ENCODE measurements at regions of chr3 and their contacts with region 1.

Region 1: GRCh38 chr3:64533617-64534317 is 154.0 kb downstream of the ADAMTS9 start:
- DNase-seq: peak; percentile 81
- H3K4me3 Mint-ChIP-seq: no peak overlapping the region
- H3K27ac Mint-ChIP-seq: no peak overlapping the region
- H3K4me1 Mint-ChIP-seq: no peaks in the 10 kb centered on the region
- H3K27me3 Mint-ChIP-seq: no peaks in the 10 kb centered on the region
- CTCF ChIP-seq: peak; percentile 65

Region 2: GRCh38 chr3:64666171-64666588 is 132.4 kb after region 1 on chr3:
- CTCF ChIA-PET with region 1: no interaction called
- intact Hi-C with region 1: loop called (anchors 10 kb)
- DNase-seq: peak; percentile 67
- H3K4me3 Mint-ChIP-seq: no peak overlapping the region
- H3K27ac Mint-ChIP-seq: peak overlapping the region; percentile 92
- H3K4me1 Mint-ChIP-seq: peaks cover 63% of the 10 kb centered on the region
- H3K27me3 Mint-ChIP-seq: no peaks in the 10 kb centered on the region
- CTCF ChIP-seq: no peak

Region 3: DNA sequence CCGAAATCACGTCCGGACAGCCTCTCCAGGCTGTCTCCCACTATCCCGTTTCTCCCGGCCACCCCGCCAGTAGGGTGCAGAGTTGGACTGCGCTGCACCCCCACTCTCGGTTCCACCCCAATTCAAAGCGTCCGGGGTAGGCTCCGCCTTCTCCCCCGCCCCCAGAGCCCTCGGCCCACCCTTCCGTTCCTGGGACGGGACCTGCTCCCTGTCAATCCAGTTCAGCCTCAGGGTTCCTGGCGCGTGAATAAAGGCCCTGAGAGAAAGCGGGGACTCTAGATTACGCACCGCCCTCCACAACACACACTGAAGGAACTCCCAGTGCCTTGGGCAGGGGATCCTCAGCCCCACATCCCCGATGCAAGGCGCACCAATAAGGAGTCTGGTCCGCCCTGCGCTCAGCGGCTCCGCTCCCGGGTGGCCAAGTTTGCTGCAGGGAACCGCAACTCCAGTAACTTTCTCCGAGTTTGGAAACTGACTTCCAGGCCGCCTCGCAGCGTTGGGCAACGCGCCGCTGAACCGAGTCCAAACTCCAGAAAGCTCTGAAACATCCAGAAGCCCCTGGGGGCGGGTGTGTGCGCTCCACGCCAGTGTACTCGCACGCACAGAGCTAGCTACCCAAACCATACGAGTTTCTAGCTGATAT is 152.2 kb after region 1 on chr3:
- CTCF ChIA-PET with region 1: interaction called, 3 read pairs
- intact Hi-C with region 1: loop called (anchors 5 kb)
- DNase-seq: peak; percentile 95
- H3K4me3 Mint-ChIP-seq: peak overlapping the region; percentile 81
- H3K27ac Mint-ChIP-seq: peak overlapping the region; percentile 97
- H3K4me1 Mint-ChIP-seq: peaks cover 21% of the 10 kb centered on the region
- H3K27me3 Mint-ChIP-seq: no peaks in the 10 kb centered on the region
- CTCF ChIP-seq: no peak

Region 4: DNA sequence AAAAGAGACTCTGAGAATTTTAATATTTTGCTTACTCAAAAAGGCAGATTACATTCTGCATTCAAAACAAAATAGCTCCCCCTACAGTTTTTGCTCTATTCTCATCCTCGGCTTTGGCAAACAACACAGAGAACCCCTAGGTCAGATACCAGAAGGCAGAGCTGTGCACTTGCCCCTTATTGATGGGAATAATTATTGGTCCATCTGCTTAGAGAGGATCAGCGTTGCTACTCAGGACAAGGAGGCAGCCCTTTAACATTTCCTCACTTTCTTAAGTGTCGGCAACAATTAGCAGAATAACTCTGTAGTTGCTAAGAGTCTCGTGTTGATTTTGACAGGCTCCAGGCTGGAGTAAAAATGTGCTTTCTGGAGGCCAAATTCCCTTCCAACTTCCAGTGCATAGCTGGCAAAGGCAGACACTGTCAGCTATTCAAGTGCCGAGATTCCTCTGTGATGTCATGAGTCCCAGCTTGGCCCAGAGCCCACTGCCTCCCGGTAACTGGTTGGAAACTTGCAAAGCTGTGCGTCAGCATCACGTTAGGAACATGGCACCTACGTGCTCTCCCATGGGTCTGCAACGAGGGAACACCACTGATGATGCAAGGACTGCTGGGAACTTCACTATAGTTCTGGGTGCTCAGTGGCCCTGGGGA is 636.7 kb after region 1 on chr3:
- CTCF ChIA-PET with region 1: no interaction called
- intact Hi-C with region 1: loop called (anchors 5 kb)
- DNase-seq: peak; percentile 50
- H3K4me3 Mint-ChIP-seq: peak overlapping the region; percentile 7
- H3K27ac Mint-ChIP-seq: no peak overlapping the region
- H3K4me1 Mint-ChIP-seq: peaks cover 31% of the 10 kb centered on the region
- H3K27me3 Mint-ChIP-seq: no peaks in the 10 kb centered on the region
- CTCF ChIP-seq: no peak

Region 5: DNA sequence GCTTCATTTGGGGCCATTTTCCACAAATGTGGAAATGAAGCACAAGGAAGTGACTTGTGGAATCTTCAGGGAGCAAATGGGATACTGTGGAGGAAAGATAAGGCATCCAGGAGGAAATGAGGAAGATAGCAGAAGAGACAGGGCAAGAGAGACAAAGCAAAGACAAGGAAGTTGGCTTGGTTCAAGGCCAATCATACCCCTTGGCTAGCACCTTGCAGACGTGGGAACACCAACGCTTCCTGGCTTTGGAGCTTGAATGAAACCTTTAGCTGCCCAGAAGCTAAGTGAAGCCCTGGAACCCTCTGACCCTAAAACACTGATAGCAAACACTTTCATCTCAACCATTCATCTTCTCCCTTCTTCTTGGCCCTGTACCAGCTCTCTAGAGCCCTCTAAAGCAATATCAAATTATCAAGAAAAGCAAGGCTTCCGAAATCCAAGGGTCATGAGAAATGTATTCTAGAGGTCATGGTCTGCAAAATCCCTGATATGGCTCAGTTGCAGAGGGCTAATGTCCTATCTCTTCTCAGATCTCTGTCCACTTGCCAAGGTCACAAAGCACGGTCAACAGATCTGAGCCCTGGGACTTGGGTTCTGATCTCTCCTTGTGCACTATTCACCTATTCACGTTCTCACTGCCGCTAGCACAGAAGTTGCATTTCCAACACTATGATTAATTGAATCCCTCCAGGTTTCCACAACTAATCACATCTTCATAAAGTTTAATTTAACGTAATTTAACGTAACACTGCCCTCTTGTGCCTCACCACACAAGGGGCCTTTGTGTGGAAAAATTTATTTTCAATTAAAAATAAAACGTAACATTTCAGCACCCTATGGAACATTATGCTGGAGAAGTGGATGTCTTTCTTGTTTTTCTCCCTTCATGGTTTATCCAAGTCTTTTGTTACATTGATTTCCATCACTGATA is 711.6 kb after region 1 on chr3:
- CTCF ChIA-PET with region 1: no interaction called
- intact Hi-C with region 1: loop called (anchors 2 kb)
- DNase-seq: peak; percentile 7
- H3K4me3 Mint-ChIP-seq: no peak overlapping the region
- H3K27ac Mint-ChIP-seq: no peak overlapping the region
- H3K4me1 Mint-ChIP-seq: peaks cover 9% of the 10 kb centered on the region
- H3K27me3 Mint-ChIP-seq: peaks cover 14% of the 10 kb centered on the region
- CTCF ChIP-seq: no peak

Region 6: GRCh38 chr3:65439641-65440284 is 906.0 kb after region 1 on chr3:
- CTCF ChIA-PET with region 1: no interaction called
- intact Hi-C with region 1: loop called (anchors 5 kb)
- DNase-seq: peak; percentile 59
- H3K4me3 Mint-ChIP-seq: no peak overlapping the region
- H3K27ac Mint-ChIP-seq: no peak overlapping the region
- H3K4me1 Mint-ChIP-seq: no peaks in the 10 kb centered on the region
- H3K27me3 Mint-ChIP-seq: no peaks in the 10 kb centered on the region
- CTCF ChIP-seq: peak; percentile 44